ENCODE measurements at regions of chr5 and their contacts with region 1.

Region 1: DNA sequence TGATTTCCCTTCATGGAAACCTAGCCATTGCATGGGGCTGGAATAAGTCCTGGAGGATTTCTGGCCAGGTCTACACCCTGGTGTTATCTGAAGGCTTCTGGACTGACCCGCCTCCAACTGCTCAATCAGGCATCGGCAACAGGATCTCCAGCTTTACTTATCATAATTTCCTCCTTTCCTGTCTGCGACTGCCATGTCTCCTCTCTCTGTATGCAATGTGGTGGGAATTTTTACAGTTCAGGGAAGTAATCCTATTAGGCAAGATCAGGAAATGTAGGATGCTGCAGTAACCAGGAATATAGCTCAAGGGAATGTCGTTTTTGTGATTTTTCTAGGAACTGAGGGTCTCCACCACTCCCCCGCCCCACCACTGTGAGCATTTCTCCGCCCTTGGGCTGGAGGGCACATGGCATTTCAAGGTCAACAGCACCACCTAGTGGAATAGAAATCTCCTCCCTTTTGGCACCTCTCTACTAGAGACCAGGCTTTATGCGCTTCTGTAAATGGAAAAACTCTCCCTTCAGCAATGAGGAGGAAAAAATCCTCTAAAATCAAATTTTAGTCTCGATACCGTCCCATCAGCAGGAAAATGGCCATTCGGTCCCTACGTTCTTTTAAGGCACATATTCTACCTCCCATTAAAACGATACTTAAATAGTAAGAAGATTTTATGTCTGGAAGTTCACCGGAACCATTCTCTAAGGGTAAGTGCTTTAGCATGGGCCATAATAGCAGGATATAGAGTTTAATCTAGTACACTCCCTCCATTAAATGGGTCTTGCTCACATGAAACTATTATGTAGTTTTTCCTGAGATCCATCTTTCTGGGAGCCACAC is 93.0 kb downstream of the YTHDC2 start:
- DNase-seq: peak; percentile 72
- ATAC-seq: peak; percentile 99
- H3K4me3 Mint-ChIP-seq: peak overlapping the region; percentile 16; the same call in 1 of the 2 replicates
- H3K27ac Mint-ChIP-seq: no peak overlapping the region
- H3K4me1 Mint-ChIP-seq: peaks cover 9% of the 10 kb centered on the region
- H3K27me3 Mint-ChIP-seq: no peaks in the 10 kb centered on the region; the same call in 1 of the 2 replicates
- CTCF ChIP-seq: peak; percentile 72

Region 2: GRCh38 chr5:113336975-113337374 is 269.5 kb before region 1 on chr5:
- CTCF ChIA-PET with region 1: interaction called, 17 read pairs
- POLR2A ChIA-PET with region 1: no interaction called
- DNase-seq: peak; percentile 16
- ATAC-seq: peak; percentile 89
- H3K4me3 Mint-ChIP-seq: no peak overlapping the region
- H3K27ac Mint-ChIP-seq: no peak overlapping the region
- H3K4me1 Mint-ChIP-seq: 0 out of 2 replicates have a peak, but pooled peaks cover 2% of the 10 kb centered on the region
- H3K27me3 Mint-ChIP-seq: no peaks in the 10 kb centered on the region
- CTCF ChIP-seq: no peak

Region 3: DNA sequence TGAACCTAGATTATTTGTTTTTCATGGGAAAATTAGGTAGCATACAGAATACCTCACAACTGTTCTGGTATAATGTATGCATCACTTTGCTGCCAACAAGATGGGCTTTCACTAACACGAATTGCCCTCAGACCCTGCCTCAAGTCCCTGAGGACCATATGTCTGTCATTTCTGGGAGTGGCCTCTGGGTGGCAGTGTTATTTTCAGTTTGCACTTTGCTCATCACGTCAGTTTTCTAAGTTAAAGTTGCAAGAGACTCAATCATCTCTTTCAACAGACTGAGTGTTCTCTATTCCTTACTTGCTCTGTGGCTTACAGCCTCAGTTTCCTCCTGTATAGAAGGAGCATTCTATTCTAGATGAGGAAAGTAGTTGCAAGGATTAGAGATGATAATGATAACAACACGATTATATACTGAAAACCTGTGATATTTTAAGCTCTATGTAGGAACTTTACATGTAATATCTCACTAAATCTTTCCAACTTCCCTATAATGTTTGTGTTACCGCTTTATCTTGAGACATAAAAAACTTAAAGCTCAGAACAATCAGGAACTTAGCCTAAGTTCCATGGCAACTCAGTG is 227.5 kb before region 1 on chr5:
- CTCF ChIA-PET with region 1: interaction called, 12 read pairs
- POLR2A ChIA-PET with region 1: no interaction called
- DNase-seq: peak; percentile 76
- ATAC-seq: peak; percentile 87
- H3K4me3 Mint-ChIP-seq: no peak overlapping the region
- H3K27ac Mint-ChIP-seq: no peak overlapping the region
- H3K4me1 Mint-ChIP-seq: peaks cover 3% of the 10 kb centered on the region; the same call in 1 of the 2 replicates
- H3K27me3 Mint-ChIP-seq: no peaks in the 10 kb centered on the region
- CTCF ChIP-seq: peak; percentile 53; the same call in 1 of the 2 replicates

Region 4: GRCh38 chr5:113435575-113435974 is 170.9 kb before region 1 on chr5:
- CTCF ChIA-PET with region 1: no interaction called
- POLR2A ChIA-PET with region 1: interaction called, 11 read pairs
- DNase-seq: no peak
- ATAC-seq: no peak
- H3K4me3 Mint-ChIP-seq: no peak overlapping the region
- H3K27ac Mint-ChIP-seq: no peak overlapping the region
- H3K4me1 Mint-ChIP-seq: no peaks in the 10 kb centered on the region
- H3K27me3 Mint-ChIP-seq: no peaks in the 10 kb centered on the region
- CTCF ChIP-seq: no peak

Region 5: DNA sequence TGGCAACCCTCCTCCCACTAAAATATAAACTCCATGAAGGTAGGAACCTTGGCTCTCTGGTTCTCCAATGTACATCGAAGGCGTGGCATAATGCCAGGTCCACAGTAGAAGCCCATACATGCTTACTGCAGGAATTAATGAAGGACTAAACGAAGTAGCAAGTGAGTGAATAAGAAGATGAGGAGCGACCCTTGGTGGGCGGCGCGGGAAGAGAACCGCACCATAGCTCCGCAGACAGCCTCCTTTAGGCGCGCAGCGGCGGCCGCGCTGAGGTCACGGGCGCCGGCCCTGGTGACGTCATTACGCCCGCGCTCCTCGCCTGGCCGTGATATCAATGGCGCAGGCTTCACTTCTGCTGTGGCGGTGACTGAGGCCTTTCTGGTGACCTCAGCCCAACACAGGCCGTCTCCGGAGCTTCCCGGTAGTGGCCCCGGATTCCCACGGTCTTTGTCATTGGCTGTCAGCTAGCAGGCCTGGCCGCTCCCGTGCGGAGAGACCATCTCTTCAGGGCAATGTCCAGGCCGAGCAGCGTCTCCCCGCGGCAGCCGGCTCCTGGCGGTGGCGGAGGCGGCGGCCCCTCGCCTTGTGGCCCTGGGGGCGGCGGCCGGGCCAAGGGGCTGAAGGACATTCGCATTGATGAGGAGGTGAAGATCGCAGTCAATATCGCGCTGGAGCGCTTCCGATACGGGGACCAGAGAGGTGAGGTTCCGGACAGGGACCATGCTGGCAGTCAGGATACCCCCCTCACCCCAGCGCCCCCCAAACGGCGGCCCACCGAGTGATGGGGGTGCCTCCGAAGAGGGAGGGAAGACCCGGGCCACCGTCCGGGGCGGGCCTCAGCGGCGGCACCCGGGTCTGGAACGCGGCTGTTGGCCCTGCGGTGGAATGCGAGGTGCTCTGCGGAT is 92.9 kb before region 1 on chr5 and contains the start of gene YTHDC2:
- CTCF ChIA-PET with region 1: interaction called, 10 read pairs
- POLR2A ChIA-PET with region 1: no interaction called
- DNase-seq: peak; percentile 82
- ATAC-seq: peak; percentile 95
- H3K4me3 Mint-ChIP-seq: peak within 1 kb of the TSS; percentile 88
- H3K27ac Mint-ChIP-seq: peak within 1 kb of the TSS; percentile 77
- H3K4me1 Mint-ChIP-seq: peaks cover 15% of the 10 kb centered on the region
- H3K27me3 Mint-ChIP-seq: peaks cover 2% of the 10 kb centered on the region
- CTCF ChIP-seq: no peak
- total RNA-seq, gene YTHDC2: 17.6 to 21.6 TPM (median 19.9 TPM) in 3 replicates